Aorta (tissue), 5 donors: ENCODE measurements at regions of chr6 and their contacts with region 1.

Region 1: GRCh38 chr6:46781478-46782378 is 11.5 kb upstream of the MEP1A start:
- DNase-seq: no peak
- ATAC-seq: no peak
- H3K4me3 ChIP-seq: no peak overlapping the region
- H3K27ac ChIP-seq: no peak overlapping the region
- H3K4me1 ChIP-seq: no peaks in the 10 kb centered on the region
- H3K27me3 ChIP-seq: no peaks in the 10 kb centered on the region

Region 2: GRCh38 chr6:46080111-46080510 is 701.6 kb before region 1 on chr6:
- intact Hi-C with region 1: loop called in 1 of 2 experiments (anchors 10 kb)
- DNase-seq: no peak
- ATAC-seq: no peak
- H3K4me3 ChIP-seq: no peak overlapping the region
- H3K27ac ChIP-seq: no peak overlapping the region
- H3K4me1 ChIP-seq: no peaks in the 10 kb centered on the region
- H3K27me3 ChIP-seq: no peaks in the 10 kb centered on the region

Region 3: GRCh38 chr6:46090115-46091079 is 691.3 kb before region 1 on chr6:
- intact Hi-C with region 1: loop called (anchors 10 kb)
- DNase-seq: peak; percentile 55 to 80
- ATAC-seq: peak; percentile 74
- H3K4me3 ChIP-seq: no peak overlapping the region
- H3K27ac ChIP-seq: no peak overlapping the region
- H3K4me1 ChIP-seq: no peaks in the 10 kb centered on the region
- H3K27me3 ChIP-seq: no peaks in the 10 kb centered on the region

Region 4: GRCh38 chr6:46419576-46420002 is 362.1 kb before region 1 on chr6:
- intact Hi-C with region 1: loop called in 1 of 2 experiments (anchors 10 kb)
- DNase-seq: peak in 1 of 2 donors; percentile 58
- ATAC-seq: peak; percentile 78
- H3K4me3 ChIP-seq: no peak overlapping the region
- H3K27ac ChIP-seq: no peak overlapping the region
- H3K4me1 ChIP-seq: peaks cover 7 to 9% of the 10 kb centered on the region in 2 donors
- H3K27me3 ChIP-seq: no peaks in the 10 kb centered on the region

Region 5: GRCh38 chr6:47203266-47203937 is 421.7 kb after region 1 on chr6:
- intact Hi-C with region 1: no loop called
- DNase-seq: no peak
- ATAC-seq: no peak
- H3K4me3 ChIP-seq: no peak overlapping the region
- H3K27ac ChIP-seq: no peak overlapping the region
- H3K4me1 ChIP-seq: no peaks in the 10 kb centered on the region
- H3K27me3 ChIP-seq: no peaks in the 10 kb centered on the region